Spleen (tissue), 13 donors: ENCODE measurements at regions of chr10 and their contacts with region 1.

Region 1: DNA sequence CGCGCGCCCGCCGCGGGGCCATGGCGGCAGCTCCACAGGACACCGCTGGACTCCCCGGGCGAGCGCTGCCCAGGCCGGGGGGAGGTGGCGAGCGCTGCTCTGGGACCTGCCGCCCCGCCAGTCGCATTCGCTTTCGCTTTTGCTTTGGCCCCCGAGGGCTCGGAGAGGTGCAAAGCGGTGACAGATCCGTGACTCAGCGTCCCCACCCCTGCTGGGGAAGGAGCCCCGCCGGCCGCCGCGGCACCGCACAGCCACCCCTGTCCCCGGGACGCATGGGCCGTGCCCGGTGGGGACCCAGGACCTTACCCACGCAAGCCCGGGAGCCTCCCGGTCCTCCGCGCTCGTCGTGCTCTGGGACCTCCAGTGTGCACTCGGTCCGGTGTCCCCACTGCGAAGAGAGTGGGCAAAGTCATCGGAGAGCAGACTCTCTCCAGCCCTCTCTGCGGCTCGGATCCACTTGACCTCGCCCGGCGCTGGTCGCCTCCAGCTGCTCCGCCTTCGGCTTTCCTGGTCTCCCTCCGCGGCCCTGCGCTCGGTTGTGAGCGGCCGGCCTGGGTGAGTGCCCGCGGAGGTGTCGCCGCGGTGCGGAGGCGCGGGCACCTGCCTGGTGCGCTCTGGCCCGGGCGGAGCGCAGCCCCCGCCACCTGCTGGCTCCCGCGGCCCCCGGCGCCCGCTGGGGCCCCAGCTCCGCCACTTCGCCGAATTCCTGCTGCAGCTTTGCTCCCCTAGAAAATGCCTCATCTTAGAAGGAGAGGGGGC is at the start of gene IL15RA:
- DNase-seq: peak; percentile 97
- H3K4me3 ChIP-seq: peak within 1 kb of the TSS; percentile 79 to 100 (median 96)
- H3K27ac ChIP-seq: peak within 1 kb of the TSS; percentile 86 to 99 (median 97)
- H3K4me1 ChIP-seq: peaks cover 24 to 53% (median 40%) of the 10 kb centered on the region in 6 donors
- H3K27me3 ChIP-seq: no peaks in the 10 kb centered on the region
- CTCF ChIP-seq: peak in 6 of 11 experiments; percentile 10 to 49 (median 44)
- POLR2A ChIP-seq: peak in 1 of 3 donors; percentile 53
- total RNA-seq, gene IL15RA: 18.7 to 37.4 (median 28.6) TPM

Region 2: GRCh38 chr10:5774987-5775620 is 202.5 kb before region 1 on chr10:
- intact Hi-C with region 1: no loop called
- DNase-seq: no peak
- H3K4me3 ChIP-seq: peak overlapping the region in 1 of 8 donors; percentile 16
- H3K27ac ChIP-seq: peak overlapping the region; percentile 32 to 74 (median 68)
- H3K4me1 ChIP-seq: peaks cover 16 to 72% (median 34%) of the 10 kb centered on the region in 6 donors
- H3K27me3 ChIP-seq: no peaks in the 10 kb centered on the region
- CTCF ChIP-seq: no peak
- POLR2A ChIP-seq: no peak

Region 3: GRCh38 chr10:5889624-5890451 is 87.8 kb before region 1 on chr10 and contains the starts of genes ANKRD16 and FBH1:
- intact Hi-C with region 1: loop called (anchors 10 kb)
- DNase-seq: peak; percentile 98
- H3K4me3 ChIP-seq: peak within 1 kb of the TSS; percentile 55 to 98 (median 96)
- H3K27ac ChIP-seq: peak within 1 kb of the TSS; percentile 71 to 94 (median 86)
- H3K4me1 ChIP-seq: peaks cover 17 to 80% (median 57%) of the 10 kb centered on the region in 6 donors
- H3K27me3 ChIP-seq: no peaks in the 10 kb centered on the region
- CTCF ChIP-seq: peak in 5 of 11 experiments; percentile 7 to 47 (median 25)
- POLR2A ChIP-seq: peak in 2 of 3 donors; percentile 41 to 81
- total RNA-seq, gene ANKRD16: 5.8 to 10.5 (median 6.8) TPM
- total RNA-seq, gene FBH1: 101 to 118 (median 111) TPM